Heart left ventricle (tissue), 16 donors: ENCODE measurements at regions of chr7 and their contacts with region 1.

Region 1: DNA sequence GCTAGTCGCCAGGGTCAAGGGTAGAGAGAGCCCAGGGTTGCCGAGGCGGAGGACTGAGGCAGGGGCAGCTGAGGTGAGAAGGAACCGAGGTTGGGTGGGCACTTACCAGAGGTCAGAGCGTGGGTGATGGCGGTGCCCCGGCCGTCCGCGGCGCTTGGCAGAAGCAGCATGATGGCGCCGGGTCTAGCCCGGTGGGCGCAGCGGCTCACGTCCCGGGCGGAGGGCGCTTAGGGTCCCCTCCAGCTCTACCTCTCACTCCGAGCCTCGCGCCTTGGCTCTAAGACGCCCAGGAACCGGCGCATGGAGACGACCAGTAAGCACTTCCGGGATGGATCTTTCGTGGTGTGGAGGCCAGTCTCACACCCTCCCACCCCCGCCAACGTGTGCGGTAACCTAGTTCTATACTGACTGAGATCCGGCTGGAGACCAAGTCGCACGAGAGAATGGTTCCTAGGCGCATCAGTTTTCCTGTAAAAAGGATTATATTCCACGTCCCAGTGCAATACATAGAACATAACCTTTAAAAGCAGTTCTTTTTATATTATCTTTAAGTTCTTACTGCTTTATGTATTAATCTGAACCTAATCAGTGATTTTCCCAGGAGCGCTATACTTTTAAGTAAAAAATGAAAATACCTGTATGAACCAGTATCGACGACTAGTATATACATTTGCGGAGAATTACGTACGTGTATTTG is at the start of gene DNAJC2:
- DNase-seq: peak; percentile 86 to 90 (median 89)
- ATAC-seq: peak; percentile 83 to 96 (median 94)
- H3K4me3 ChIP-seq: peak within 1 kb of the TSS; percentile 75 to 99 (median 90)
- H3K27ac ChIP-seq: peak within 1 kb of the TSS; percentile 56 to 91 (median 82)
- H3K4me1 ChIP-seq: peaks cover 6 to 57% (median 37%) of the 10 kb centered on the region in 12 donors
- H3K27me3 ChIP-seq: no peaks in the 10 kb centered on the region
- CTCF ChIP-seq: no peak
- POLR2A ChIP-seq: peak in 1 of 2 donors; percentile 31
- total RNA-seq, gene DNAJC2: 6.9 to 18.3 (median 13.2) TPM

Region 2: GRCh38 chr7:103292122-103292521 is 52.5 kb before region 1 on chr7:
- intact Hi-C with region 1: loop called in 7 of 10 experiments (anchors 2 to 5 kb)
- DNase-seq: no peak
- ATAC-seq: no peak
- H3K4me3 ChIP-seq: no peak overlapping the region
- H3K27ac ChIP-seq: no peak overlapping the region
- H3K4me1 ChIP-seq: peaks cover 0 to 8% (median 4%) of the 10 kb centered on the region in 12 donors
- H3K27me3 ChIP-seq: peaks cover 0 to 10% (median 0%) of the 10 kb centered on the region in 9 donors
- CTCF ChIP-seq: no peak
- POLR2A ChIP-seq: no peak